ENCODE measurements at regions of chr10 and their contacts with region 1.

Region 1: GRCh38 chr10:129438024-129438423 is 29.0 kb upstream of the MGMT start:
- DNase-seq: no peak
- H3K4me3 ChIP-seq: no peak overlapping the region
- CTCF ChIP-seq: no peak

Region 2: GRCh38 chr10:129353096-129353495 is 84.9 kb before region 1 on chr10:
- in situ Hi-C with region 1: no loop called
- DNase-seq: no peak
- H3K4me3 ChIP-seq: no peak overlapping the region
- CTCF ChIP-seq: no peak

Region 3: DNA sequence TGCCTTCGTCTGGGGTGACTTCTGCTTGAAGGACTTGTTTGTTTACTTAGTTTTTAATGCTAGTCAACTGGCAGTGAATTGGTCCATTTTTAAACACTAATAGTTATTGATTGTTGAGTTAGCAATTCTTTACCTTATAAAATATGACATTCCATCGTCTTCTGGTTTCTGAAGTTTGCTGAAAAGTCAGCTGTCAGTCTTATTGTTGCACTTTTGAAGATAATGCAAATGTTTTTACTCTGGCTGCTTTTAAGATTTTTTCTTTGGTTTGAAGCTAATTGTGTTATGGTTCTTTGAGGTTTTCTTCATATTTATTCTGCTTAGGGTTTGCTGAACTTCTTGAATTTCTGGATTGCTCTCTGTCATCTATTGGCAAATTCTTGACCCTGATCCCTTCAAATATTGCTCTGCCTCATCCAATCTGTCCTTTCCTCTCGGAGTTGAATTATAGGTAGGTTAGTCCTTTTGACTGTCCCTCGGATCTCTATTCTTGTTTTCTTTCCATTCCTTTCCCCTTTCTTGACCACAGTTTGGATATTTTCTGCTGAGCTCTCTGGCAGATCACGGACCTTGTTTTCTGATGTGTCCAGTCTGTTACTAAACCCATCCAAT is 53.2 kb after region 1 on chr10:
- in situ Hi-C with region 1: loop called (anchors 5 kb)
- DNase-seq: no peak
- H3K4me3 ChIP-seq: no peak overlapping the region
- CTCF ChIP-seq: no peak

Measured in astrocyte of the cerebellum (primary cell).